BJ (cell line): ENCODE measurements at regions of chr12 and their contacts with region 1.

Region 1: GRCh38 chr12:7060353-7060954 is at the start of gene C1S:
- DNase-seq: peak; percentile 97
- H3K4me3 ChIP-seq: peak within 1 kb of the TSS; percentile 43
- H3K27me3 ChIP-seq: no peaks in the 10 kb centered on the region
- CTCF ChIP-seq: peak; percentile 88
- polyA plus RNA-seq, gene C1S: 329 and 341 TPM in 2 replicates

Region 2: DNA sequence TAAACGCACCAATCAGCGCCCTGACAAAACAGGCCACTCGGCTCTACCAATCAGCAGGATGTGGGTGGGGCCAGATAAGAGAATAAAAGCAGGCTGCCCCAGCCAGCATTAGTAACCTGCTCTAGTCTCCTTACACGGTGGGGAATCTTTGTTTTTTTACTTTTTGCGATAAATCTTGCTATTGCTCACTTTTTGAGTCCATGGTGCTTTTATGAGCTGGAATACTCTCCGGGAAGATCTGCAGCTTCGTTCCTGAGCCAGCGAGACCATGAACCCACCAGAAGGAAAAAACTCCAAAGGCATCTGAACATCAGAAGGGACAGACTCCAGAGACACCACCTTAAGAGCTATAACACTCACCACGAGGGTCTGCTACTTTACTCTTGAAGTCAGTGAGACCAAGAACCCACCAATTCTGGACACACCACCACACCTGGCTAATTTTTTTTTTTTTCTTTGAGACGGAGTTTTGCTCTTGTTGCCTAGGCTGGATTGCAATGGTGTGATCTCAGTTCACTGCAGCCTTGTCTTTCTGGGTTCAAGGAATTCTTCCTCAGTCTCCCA is 343.5 kb before region 1 on chr12:
- CTCF ChIA-PET with region 1: no interaction called
- POLR2A ChIA-PET with region 1: no interaction called
- DNase-seq: no peak
- H3K4me3 ChIP-seq: no peak overlapping the region
- H3K27me3 ChIP-seq: no peaks in the 10 kb centered on the region
- CTCF ChIP-seq: no peak

Region 3: GRCh38 chr12:7042842-7043241 is 17.6 kb before region 1 on chr12:
- CTCF ChIA-PET with region 1: interaction called, 14 read pairs
- POLR2A ChIA-PET with region 1: no interaction called
- DNase-seq: no peak
- H3K4me3 ChIP-seq: no peak overlapping the region
- H3K27me3 ChIP-seq: peaks cover 1% of the 10 kb centered on the region; the same call in 1 of the 2 replicates
- CTCF ChIP-seq: peak; percentile 52

Region 4: DNA sequence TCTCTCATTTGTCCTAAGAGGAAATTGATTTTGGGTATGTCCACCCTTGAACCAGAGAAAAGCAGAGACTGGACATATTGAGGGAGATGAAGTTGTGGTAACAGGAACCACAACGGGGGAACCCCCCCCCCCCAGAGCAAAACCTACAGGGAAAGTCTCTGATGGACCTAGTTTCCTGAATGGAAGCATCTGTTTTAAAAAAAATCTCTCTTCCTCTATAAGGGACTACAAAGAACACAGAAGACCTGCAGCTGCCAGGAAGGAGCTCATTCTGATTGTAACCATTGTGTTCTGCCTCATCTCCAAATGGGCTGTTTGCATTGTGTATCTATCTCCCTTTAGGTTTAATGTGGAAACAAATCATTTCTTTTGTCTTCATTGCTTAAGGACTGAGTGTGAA is 13.5 kb after region 1 on chr12:
- CTCF ChIA-PET with region 1: interaction called, 11 read pairs
- POLR2A ChIA-PET with region 1: interaction called, 3 read pairs
- DNase-seq: no peak
- H3K4me3 ChIP-seq: no peak overlapping the region
- H3K27me3 ChIP-seq: no peaks in the 10 kb centered on the region
- CTCF ChIP-seq: no peak

Region 5: GRCh38 chr12:7079826-7080125 is 19.3 kb after region 1 on chr12:
- CTCF ChIA-PET with region 1: interaction called, 8 read pairs
- POLR2A ChIA-PET with region 1: interaction called, 12 read pairs
- DNase-seq: peak; percentile 21
- H3K4me3 ChIP-seq: no peak overlapping the region
- H3K27me3 ChIP-seq: no peaks in the 10 kb centered on the region
- CTCF ChIP-seq: no peak

Region 6: DNA sequence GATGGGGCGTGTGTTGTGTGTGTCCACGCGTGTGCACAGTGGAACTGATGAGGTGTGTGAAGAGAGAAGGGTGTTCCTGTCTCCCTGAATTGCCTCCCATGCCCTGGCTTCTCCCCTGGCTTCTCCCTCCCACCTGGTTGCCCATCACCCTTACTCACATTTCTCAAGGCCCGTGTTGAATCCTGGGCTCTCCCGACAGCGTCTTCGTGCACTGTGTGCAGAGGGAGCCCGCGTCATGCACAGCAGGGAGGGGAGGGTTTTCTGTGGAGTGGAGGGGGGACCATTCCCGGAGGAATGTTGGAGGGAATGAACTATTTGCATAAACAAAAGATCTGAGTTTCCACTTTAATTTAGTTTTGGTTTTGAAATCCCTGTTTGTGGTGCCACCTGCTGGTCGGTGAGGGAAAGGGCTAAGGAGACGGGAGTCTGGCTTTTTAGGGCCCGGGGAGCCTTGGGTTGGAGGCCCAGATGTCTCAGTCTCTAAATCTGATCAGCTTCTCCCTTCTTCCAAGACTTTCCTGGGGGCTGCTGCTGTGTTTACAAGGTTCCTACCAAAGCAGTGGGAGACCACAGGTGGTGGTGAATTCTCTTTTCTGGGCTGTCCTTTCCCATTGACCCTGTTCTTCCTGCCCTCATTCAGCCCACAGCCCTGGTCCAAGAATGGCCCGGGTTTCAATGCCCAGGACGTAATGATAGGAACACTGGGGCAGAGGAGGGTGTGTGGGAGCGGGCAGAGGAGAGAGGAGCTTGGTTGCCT is 32.0 kb after region 1 on chr12 and contains the start of gene C1R:
- CTCF ChIA-PET with region 1: interaction called, 39 read pairs
- POLR2A ChIA-PET with region 1: no interaction called
- DNase-seq: peak; percentile 63
- H3K4me3 ChIP-seq: peak within 1 kb of the TSS; percentile 76
- H3K27me3 ChIP-seq: no peaks in the 10 kb centered on the region
- CTCF ChIP-seq: peak; percentile 87
- polyA plus RNA-seq, gene C1R: 668 and 703 TPM in 2 replicates